ENCODE measurements at regions of chr9 and their contacts with region 1.

Region 1: GRCh38 chr9:128127990-128128835 is 684 bp upstream of the PTGES2 start:
- DNase-seq: peak; percentile 90
- ATAC-seq: peak; percentile 84
- H3K4me3 Mint-ChIP-seq: peak overlapping the region; percentile 96
- H3K27ac Mint-ChIP-seq: peak overlapping the region; percentile 96
- H3K4me1 Mint-ChIP-seq: peaks cover 29% of the 10 kb centered on the region
- H3K27me3 Mint-ChIP-seq: peaks cover 2% of the 10 kb centered on the region

Region 2: GRCh38 chr9:127611899-127612790 is 516.1 kb before region 1 on chr9 and contains the start of gene STXBP1:
- CTCF ChIA-PET with region 1: no interaction called
- POLR2A ChIA-PET with region 1: no interaction called
- intact Hi-C with region 1: loop called in 1 of 2 experiments (anchors 1 kb)
- DNase-seq: peak; percentile 92
- ATAC-seq: peak; percentile 87
- H3K4me3 Mint-ChIP-seq: peak within 1 kb of the TSS; percentile 85
- H3K27ac Mint-ChIP-seq: peak within 1 kb of the TSS; percentile 71
- H3K4me1 Mint-ChIP-seq: peaks cover 26% of the 10 kb centered on the region
- H3K27me3 Mint-ChIP-seq: peaks cover 32% of the 10 kb centered on the region
- total RNA-seq, gene STXBP1: 15.9 to 18.1 TPM

Region 3: DNA sequence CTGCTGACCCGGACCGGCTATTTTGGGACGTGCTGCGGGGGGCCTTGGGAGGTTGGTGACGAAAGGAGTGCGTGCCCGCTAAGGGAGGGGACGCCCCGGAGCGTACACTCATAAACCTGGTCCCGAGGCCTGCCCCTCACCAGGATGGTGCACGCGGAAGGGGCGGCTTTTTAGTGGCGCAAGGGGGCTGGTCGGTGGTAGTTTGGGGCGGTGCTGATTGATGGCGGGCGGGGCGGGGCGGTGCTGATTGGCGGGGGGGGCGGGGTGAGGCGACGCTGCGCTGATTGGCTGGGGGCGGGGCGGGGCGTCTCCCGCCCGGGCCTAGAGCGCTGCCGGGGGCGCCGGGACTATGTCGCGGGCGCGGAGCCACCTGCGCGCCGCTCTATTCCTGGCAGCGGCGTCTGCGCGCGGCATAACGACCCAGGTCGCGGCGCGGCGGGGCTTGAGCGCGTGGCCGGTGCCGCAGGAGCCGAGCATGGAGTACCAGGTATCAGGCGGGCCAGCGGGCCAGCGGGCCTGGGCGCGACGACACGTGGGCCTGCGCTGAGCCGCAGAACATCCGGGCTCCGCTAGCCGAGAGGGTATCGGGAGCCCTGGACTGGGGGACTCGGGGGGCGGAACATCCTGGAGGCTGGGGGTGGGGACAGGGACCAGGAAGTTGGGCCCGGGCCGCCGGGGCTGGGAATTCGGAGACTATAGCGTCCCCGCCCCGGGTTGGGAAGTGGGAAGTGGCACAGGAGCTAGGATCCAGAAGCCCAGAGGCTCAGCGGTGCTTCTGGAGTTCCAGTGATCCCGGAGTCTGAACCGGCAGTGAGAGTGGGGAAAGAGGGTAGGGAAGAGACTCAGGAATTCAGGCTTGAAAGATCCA is 325.4 kb before region 1 on chr9 and contains the start of gene FPGS:
- CTCF ChIA-PET with region 1: no interaction called
- POLR2A ChIA-PET with region 1: no interaction called
- intact Hi-C with region 1: loop called in 1 of 2 experiments (anchors 1 kb)
- DNase-seq: peak; percentile 93
- ATAC-seq: peak; percentile 86
- H3K4me3 Mint-ChIP-seq: peak within 1 kb of the TSS; percentile 98
- H3K27ac Mint-ChIP-seq: peak within 1 kb of the TSS; percentile 95
- H3K4me1 Mint-ChIP-seq: peaks cover 26% of the 10 kb centered on the region
- H3K27me3 Mint-ChIP-seq: no peaks in the 10 kb centered on the region
- total RNA-seq, gene FPGS: 71.9 to 80.4 TPM

Region 4: DNA sequence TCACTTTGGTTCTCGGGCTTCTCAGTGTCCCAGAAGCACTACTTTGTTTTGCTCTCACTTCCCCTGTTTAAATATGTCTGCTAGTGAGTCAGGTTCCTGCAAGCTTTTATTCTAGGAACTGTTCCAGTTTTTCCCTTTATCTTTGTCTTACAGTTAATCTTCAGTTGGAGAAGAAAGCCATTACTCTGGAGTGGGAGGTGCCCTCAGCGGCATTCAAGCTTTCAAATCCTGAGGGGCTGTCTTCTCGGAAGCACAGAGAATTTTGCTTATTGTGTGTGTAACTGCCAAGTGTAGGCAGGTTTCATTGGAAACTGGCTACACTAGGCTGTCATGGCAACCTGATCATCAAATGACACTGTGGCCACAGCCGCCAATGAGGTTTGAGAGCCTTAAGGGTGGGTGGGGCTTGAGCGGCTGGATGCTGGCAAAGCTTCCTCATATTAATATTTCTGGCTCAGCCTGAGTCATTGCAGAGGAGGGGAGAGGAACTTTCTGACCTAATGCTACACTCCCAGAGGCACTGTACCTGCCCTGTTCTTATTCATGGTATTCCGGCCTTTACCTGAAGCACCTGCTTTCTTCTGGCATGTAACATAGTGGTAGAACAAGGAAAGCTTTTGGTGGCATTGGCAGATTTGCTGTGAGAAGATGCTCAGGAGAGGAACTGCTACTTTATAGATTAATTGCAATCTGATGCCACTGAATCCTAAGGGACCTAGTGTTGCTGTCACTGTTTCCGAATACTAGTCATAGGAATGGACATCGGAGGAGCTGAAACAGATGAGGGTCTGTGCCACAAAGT is 33.8 kb before region 1 on chr9:
- CTCF ChIA-PET with region 1: interaction called, 5 read pairs
- POLR2A ChIA-PET with region 1: no interaction called
- intact Hi-C with region 1: loop called in 1 of 2 experiments (anchors 1 kb)
- DNase-seq: peak; percentile 93
- ATAC-seq: peak; percentile 94
- H3K4me3 Mint-ChIP-seq: peak overlapping the region; percentile 61
- H3K27ac Mint-ChIP-seq: peak overlapping the region; percentile 97
- H3K4me1 Mint-ChIP-seq: peaks cover 84% of the 10 kb centered on the region
- H3K27me3 Mint-ChIP-seq: no peaks in the 10 kb centered on the region

Region 5: GRCh38 chr9:128203024-128203706 is 75.0 kb after region 1 on chr9 and contains the start of gene DNM1:
- CTCF ChIA-PET with region 1: no interaction called
- POLR2A ChIA-PET with region 1: interaction called, 8 read pairs
- intact Hi-C with region 1: loop called in 1 of 2 experiments (anchors 1 kb)
- DNase-seq: peak; percentile 83
- ATAC-seq: peak; percentile 95
- H3K4me3 Mint-ChIP-seq: peak within 1 kb of the TSS; percentile 39
- H3K27ac Mint-ChIP-seq: peak within 1 kb of the TSS; percentile 66
- H3K4me1 Mint-ChIP-seq: peaks cover 12% of the 10 kb centered on the region
- H3K27me3 Mint-ChIP-seq: peaks cover 11% of the 10 kb centered on the region
- total RNA-seq, gene DNM1: 0.50 to 0.72 TPM

Region 6: DNA sequence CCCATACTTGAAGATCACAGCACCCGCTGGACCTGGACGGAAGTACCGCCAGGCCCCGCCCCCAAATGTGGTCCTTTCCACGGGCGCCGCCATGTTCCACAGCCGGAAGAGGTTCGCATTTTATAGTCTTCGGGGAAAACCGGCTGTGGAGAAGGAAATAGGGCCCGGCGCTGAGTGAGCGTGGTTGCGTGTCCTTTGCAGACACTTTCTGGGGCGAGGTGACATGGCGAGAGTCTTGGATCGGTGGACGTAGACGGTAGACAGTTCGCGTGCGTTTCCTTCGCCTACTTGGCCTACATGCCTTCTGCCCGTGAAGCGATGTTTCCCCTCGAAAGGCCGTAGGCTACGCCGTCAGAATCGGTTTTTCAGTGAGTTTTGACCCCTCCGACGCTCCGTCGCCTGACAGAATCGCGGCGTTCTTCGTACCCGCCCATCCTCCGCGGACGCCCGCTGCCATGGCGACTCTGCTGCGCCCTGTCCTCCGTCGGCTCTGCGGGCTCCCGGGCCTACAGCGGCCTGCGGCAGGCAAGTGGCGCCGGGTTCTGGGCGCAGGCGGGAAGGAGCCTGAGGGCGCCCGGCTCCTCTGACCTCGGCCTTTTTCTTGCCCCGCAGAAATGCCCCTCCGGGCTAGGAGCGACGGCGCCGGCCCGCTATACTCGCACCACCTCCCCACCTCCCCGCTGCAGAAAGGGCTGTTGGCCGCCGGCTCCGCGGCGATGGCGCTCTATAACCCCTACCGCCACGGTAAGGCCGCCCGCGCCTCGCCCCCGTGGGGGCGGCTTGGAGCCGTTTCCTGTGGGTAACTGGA is 194.4 kb after region 1 on chr9 and contains the starts of genes COQ4 and TRUB2:
- CTCF ChIA-PET with region 1: no interaction called
- POLR2A ChIA-PET with region 1: no interaction called
- intact Hi-C with region 1: loop called (anchors 1 to 5 kb)
- DNase-seq: peak; percentile 96
- ATAC-seq: peak; percentile 90
- H3K4me3 Mint-ChIP-seq: peak within 1 kb of the TSS; percentile 87
- H3K27ac Mint-ChIP-seq: peak within 1 kb of the TSS; percentile 93
- H3K4me1 Mint-ChIP-seq: peaks cover 19% of the 10 kb centered on the region
- H3K27me3 Mint-ChIP-seq: no peaks in the 10 kb centered on the region
- total RNA-seq, gene COQ4: 32.1 to 38.8 TPM
- total RNA-seq, gene TRUB2: 29.5 to 37.5 TPM

Region 7: DNA sequence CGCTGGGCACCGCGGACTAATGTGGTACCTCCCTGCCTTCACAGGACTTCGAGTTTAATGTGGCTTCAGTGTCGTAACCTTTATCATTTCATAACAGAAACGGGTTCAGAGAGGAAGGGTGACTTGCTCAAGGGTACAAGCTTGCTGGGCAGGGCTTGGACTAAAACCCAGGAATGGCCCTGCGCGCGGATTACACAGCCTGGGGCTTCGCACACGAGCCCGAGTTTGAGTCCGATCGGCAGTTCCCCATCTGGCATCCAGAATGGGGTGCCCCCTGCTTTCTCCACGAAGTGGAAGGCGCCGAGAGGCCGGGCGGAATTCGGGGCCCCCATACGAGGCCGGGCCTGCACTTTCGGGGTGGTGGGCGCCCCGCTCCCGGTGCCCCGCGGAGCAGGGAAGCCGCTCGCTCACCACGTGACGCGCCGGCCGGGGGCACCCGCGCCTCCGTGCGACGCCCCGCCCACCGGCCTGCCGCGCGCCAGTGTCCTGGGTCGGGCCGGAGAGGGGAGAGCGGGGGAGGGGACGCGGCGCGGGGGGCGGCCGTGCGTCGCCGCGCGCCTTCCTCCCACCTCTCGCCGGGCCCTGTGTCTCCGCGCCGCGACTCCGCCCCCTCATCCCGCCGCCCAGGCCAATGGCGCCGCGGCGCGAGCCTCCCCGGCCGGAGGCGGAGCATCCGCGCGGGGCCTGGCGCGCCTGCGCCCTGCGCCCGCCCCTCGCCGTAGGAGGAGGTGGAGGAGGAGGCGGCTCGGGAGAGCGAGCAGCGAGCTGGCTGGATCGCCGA is 560.5 kb after region 1 on chr9 and contains the start of gene SET:
- CTCF ChIA-PET with region 1: no interaction called
- POLR2A ChIA-PET with region 1: no interaction called
- intact Hi-C with region 1: loop called in 1 of 2 experiments (anchors 2 kb)
- DNase-seq: peak; percentile 96
- ATAC-seq: peak; percentile 71
- H3K4me3 Mint-ChIP-seq: peak within 1 kb of the TSS; percentile 99
- H3K27ac Mint-ChIP-seq: peak within 1 kb of the TSS; percentile 94
- H3K4me1 Mint-ChIP-seq: peaks cover 61% of the 10 kb centered on the region
- H3K27me3 Mint-ChIP-seq: no peaks in the 10 kb centered on the region
- total RNA-seq, gene SET: 673 to 682 TPM